Colonic mucosa (tissue), 4 donors: ENCODE measurements at regions of chr3 and their contacts with region 1.

Region 1: GRCh38 chr3:72818092-72818773 is 30.0 kb downstream of the SHQ1 start:
- DNase-seq: no peak
- H3K4me3 ChIP-seq: no peak overlapping the region
- H3K27ac ChIP-seq: no peak overlapping the region
- H3K4me1 ChIP-seq: peaks cover 16% of the 10 kb centered on the region
- H3K27me3 ChIP-seq: no peaks in the 10 kb centered on the region
- CTCF ChIP-seq: peak; percentile 28

Region 2: GRCh38 chr3:71710906-71711494 is 1107.2 kb before region 1 on chr3:
- intact Hi-C with region 1: loop called (anchors 10 kb)
- DNase-seq: no peak
- H3K4me3 ChIP-seq: no peak overlapping the region
- H3K27ac ChIP-seq: no peak overlapping the region
- H3K4me1 ChIP-seq: no peaks in the 10 kb centered on the region
- H3K27me3 ChIP-seq: no peaks in the 10 kb centered on the region
- CTCF ChIP-seq: peak; percentile 55

Region 3: GRCh38 chr3:71875461-71875947 is 942.7 kb before region 1 on chr3:
- intact Hi-C with region 1: loop called (anchors 10 kb)
- DNase-seq: peak; percentile 77
- H3K4me3 ChIP-seq: no peak overlapping the region
- H3K27ac ChIP-seq: no peak overlapping the region
- H3K4me1 ChIP-seq: no peaks in the 10 kb centered on the region
- H3K27me3 ChIP-seq: no peaks in the 10 kb centered on the region
- CTCF ChIP-seq: peak; percentile 91

Region 4: GRCh38 chr3:71955240-71956068 is 862.8 kb before region 1 on chr3:
- intact Hi-C with region 1: loop called (anchors 10 kb)
- DNase-seq: peak; percentile 79
- H3K4me3 ChIP-seq: no peak overlapping the region
- H3K27ac ChIP-seq: no peak overlapping the region
- H3K4me1 ChIP-seq: no peaks in the 10 kb centered on the region
- H3K27me3 ChIP-seq: no peaks in the 10 kb centered on the region
- CTCF ChIP-seq: peak; percentile 46

Region 5: GRCh38 chr3:72265256-72266015 is 552.8 kb before region 1 on chr3:
- intact Hi-C with region 1: loop called (anchors 5 kb)
- DNase-seq: no peak
- H3K4me3 ChIP-seq: no peak overlapping the region
- H3K27ac ChIP-seq: no peak overlapping the region
- H3K4me1 ChIP-seq: no peaks in the 10 kb centered on the region
- H3K27me3 ChIP-seq: no peaks in the 10 kb centered on the region
- CTCF ChIP-seq: peak; percentile 26

Region 6: GRCh38 chr3:72665701-72666443 is 152.4 kb before region 1 on chr3:
- intact Hi-C with region 1: loop called (anchors 2 kb)
- DNase-seq: peak; percentile 75
- H3K4me3 ChIP-seq: no peak overlapping the region
- H3K27ac ChIP-seq: no peak overlapping the region
- H3K4me1 ChIP-seq: no peaks in the 10 kb centered on the region
- H3K27me3 ChIP-seq: no peaks in the 10 kb centered on the region
- CTCF ChIP-seq: peak; percentile 51

Region 7: GRCh38 chr3:72768006-72768441 is 50.2 kb before region 1 on chr3:
- intact Hi-C with region 1: no loop called
- DNase-seq: no peak
- H3K4me3 ChIP-seq: no peak overlapping the region
- H3K27ac ChIP-seq: no peak overlapping the region
- H3K4me1 ChIP-seq: no peaks in the 10 kb centered on the region
- H3K27me3 ChIP-seq: no peaks in the 10 kb centered on the region
- CTCF ChIP-seq: no peak